Thyroid gland (tissue), 4 donors: ENCODE measurements at regions of chr6 and their contacts with region 1.

Region 1: DNA sequence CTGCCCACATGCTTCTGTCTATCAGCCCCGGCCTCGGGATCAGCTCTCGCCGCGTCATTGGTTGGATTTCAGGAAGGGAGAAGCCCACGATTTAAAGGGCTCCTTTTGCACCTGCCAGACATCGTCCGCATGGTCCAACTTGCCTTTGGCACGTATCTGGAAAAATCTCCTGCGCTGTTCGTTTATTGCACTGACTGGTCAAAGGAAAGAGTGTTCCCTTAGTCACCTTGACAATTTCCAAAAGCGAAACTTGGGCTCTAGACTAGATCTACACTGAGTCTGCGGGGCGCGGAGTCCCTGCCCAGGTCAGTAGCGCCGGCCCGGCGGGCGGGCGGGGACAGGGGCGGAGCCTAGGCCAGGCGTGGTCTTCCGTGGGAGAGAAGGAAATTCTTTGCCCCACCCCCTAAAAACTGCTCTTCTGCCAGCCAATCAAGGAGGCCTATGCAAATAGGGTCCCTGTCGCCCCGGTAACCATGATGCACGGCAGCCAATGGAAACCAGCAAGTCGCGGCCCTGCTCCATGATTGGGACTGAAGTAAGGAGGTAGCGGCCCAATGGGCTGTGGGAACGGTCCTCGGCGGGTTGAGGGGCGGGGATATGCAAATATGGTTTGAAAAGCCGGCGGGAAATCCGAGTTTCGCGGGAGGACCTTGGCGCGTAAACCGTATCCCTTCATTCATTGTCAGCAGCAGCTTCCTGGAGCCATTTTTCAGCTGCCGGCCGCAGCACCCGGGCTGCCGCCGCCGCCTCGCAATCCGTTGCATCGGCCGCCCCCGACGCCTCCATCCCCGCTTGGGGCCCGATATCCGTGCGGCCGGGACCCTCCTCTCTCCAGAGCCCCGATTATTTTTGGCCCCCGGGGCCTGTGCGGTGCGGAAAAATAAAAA is at the start of gene E2F3:
- DNase-seq: peak; percentile 100
- H3K4me3 ChIP-seq: peak within 1 kb of the TSS; percentile 54 to 86 (median 73)
- H3K27ac ChIP-seq: peak within 1 kb of the TSS; percentile 91 to 92 (median 92)
- H3K4me1 ChIP-seq: peaks cover 0 to 6% of the 10 kb centered on the region in 2 donors
- H3K27me3 ChIP-seq: no peaks in the 10 kb centered on the region
- CTCF ChIP-seq: no peak
- POLR2A ChIP-seq: peak in 1 of 2 donors; percentile 62
- total RNA-seq, gene E2F3: 9.4 to 18.0 (median 12.4) TPM

Region 2: DNA sequence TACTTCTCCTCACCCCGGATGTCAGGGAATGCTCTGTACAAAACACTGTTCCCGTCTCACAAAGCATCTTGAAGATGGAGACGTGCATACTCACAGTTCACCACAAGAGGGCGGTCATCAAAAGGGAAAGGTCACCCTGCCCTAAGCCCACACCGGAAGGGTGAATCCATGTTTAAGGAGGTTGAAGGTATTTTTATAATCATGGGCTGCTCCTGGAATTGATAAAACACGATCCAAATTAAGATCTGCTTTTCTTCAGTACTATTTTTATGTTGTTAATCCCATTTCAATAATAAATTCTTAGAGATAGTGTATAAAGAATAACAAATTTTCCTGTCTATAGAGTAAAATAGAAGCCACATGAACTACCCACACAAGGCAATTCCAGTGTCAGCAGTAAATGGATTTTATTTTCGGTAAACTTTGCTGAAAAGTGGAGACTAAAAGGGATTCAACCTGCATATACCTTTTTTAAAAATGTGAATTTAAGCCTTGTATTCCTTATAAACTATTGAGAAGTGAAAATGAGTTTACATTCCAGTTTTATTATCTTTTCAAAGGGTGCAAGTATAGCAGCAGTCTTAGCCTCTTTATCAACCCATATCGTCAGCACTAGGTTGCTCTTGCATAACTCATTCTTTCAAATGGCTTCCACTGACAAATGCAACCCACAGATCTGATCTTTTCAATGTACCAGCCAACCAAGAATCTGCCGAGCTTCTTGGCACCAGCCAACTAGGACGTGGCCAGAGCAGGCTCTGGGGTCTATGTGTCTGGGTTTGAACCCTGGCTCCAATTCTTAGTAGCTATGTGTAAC is 109.5 kb before region 1 on chr6:
- intact Hi-C with region 1: loop called (anchors 5 kb)
- DNase-seq: peak; percentile 86 to 87
- H3K4me3 ChIP-seq: no peak overlapping the region
- H3K27ac ChIP-seq: no peak overlapping the region
- H3K4me1 ChIP-seq: no peaks in the 10 kb centered on the region
- H3K27me3 ChIP-seq: no peaks in the 10 kb centered on the region
- CTCF ChIP-seq: peak; percentile 68 to 95 (median 86)
- POLR2A ChIP-seq: no peak

Region 3: DNA sequence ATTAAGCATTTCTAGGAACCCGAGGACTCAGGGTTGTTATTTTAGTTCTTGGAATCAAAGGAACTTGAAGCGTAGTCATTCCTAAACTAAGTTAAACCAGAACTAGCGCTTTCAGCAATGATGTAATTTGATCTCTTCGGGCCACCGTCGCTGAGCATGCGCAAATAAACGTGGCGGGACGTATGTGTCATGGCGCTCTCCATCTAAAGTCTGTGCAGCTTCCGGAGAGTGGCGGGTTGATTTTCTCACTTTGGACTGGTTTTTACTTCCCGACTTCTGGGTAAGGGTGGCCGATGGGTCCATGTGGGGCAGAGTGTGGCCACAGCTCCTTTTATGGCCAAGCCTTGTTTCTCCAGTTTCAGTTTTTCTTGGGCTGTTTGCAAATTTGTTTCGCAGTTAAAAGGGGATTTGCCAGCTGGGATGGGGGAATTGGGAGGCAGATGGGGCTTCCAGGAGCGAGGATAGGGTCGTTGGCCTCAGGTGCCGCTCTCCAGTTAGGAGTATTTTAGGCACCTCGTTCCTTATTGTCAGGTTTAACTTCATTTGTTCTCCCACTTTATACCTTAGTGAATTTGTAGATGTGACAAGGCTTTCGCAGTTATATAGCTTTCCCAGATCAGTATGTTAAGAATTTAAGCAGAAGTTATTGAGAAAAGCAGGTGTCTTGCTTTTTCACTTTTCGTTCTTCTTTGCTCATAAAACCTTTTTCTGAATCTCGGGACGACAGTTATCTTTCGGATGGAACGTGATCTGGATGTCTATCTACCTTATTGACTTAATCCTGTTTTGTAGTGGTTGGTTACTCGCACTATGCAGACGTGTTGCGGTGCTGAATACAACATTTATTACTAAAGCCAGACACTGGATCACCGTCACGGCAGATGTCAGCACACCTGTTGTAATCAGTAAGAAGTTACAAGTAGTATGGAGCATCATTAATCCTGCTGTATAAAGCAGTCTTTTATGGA is 133.1 kb after region 1 on chr6 and contains the start of gene CDKAL1:
- intact Hi-C with region 1: loop called (anchors 5 kb)
- DNase-seq: peak; percentile 90 to 92
- H3K4me3 ChIP-seq: peak within 1 kb of the TSS; percentile 3 to 87 (median 50)
- H3K27ac ChIP-seq: peak within 1 kb of the TSS; percentile 58 to 89 (median 74)
- H3K4me1 ChIP-seq: peaks cover 17 to 27% of the 10 kb centered on the region in 2 donors
- H3K27me3 ChIP-seq: no peaks in the 10 kb centered on the region
- CTCF ChIP-seq: peak in 1 of 6 experiments; percentile 3
- POLR2A ChIP-seq: peak in 1 of 2 donors; percentile 63
- total RNA-seq, gene CDKAL1: 24.7 to 32.8 (median 29.8) TPM